B cell (primary cell): ENCODE measurements at regions of chr15 and their contacts with region 1.

Region 1: DNA sequence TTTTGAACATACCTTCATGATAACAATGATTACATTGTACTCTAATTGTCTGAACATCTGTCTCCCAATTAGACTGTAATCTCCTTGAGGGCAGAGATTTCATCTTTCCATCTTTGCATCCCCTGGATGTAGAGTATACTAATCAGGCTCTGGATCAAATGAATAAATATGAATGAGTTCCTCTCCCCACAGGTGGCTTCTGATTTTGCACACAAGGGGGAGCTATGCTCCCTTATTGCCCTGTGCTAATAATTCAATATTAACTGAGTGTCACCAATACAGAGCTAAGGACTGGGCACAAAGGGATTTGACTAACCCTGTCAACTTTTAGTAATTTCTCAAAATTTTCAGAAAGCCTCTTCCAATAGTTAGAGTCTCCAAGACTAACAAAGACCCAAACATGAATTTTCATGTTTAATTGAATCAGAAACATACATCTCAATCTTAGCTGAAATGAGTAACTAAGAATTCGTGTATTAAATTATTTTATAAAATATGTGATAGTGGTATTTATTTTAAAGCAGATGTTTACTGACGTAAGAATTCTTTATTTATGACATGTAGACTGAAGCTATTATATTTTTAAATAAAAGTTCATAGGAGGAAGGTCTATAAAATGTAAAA is 3.0 kb downstream of the DUOXA1 start:
- DNase-seq: peak; percentile 70
- ATAC-seq: peak; percentile 59
- H3K4me3 ChIP-seq: no peak overlapping the region
- H3K4me3 Mint-ChIP-seq: no peak overlapping the region
- H3K27ac ChIP-seq: no peak overlapping the region
- H3K27ac Mint-ChIP-seq: no peak overlapping the region
- H3K4me1 ChIP-seq: peaks cover 15 to 22% of the 10 kb centered on the region in 2 donors
- H3K4me1 Mint-ChIP-seq: peaks cover 8% of the 10 kb centered on the region
- H3K27me3 ChIP-seq: peaks cover 0 to 55% (median 28%) of the 10 kb centered on the region in 4 experiments
- H3K27me3 Mint-ChIP-seq: peaks cover 60% of the 10 kb centered on the region
- CTCF ChIP-seq: peak; percentile 93

Region 2: DNA sequence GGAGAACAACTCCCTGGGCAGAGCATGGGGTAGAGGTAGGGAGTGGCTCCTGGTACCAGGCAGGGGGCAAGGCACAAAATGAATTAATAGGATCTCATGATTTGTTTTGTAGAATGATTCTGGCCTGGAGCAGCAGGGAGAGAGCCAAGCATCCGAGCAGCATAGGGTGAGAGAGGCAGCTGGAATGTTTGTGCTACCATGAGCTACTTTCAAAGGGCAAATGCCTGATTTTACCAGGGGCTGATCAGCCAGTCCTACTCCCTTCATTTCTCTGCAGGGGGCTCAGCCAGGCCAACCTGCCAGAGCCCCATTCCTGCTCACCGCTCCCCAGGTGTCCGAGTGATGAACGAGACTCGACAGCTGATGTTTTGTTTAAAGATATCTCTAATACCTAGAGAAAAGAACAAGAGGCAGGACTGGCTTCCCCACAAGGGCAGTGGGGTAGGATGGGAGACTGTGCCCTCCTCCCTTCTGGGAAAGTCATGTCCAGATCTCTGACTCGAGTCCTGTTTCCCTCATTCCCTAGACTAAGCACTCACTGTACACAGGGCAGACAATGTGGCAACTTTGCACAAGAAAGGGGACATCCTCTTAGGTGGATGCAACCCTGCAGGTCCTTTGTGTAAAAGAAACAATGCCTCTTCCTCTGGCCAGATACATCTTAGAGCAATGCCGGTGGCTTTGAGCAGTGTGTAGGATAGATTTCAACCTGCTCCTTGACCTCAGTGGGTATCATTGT is 25.6 kb before region 1 on chr15:
- CTCF ChIA-PET with region 1: no interaction called
- POLR2A ChIA-PET with region 1: no interaction called
- intact Hi-C with region 1: no loop called
- DNase-seq: no peak
- ATAC-seq: no peak
- H3K4me3 ChIP-seq: no peak overlapping the region
- H3K4me3 Mint-ChIP-seq: no peak overlapping the region
- H3K27ac ChIP-seq: no peak overlapping the region
- H3K27ac Mint-ChIP-seq: no peak overlapping the region
- H3K4me1 ChIP-seq: no peaks in the 10 kb centered on the region
- H3K4me1 Mint-ChIP-seq: no peaks in the 10 kb centered on the region
- H3K27me3 ChIP-seq: peaks cover 0 to 2% (median 0%) of the 10 kb centered on the region in 4 experiments
- H3K27me3 Mint-ChIP-seq: peaks cover 23% of the 10 kb centered on the region
- CTCF ChIP-seq: no peak

Region 3: DNA sequence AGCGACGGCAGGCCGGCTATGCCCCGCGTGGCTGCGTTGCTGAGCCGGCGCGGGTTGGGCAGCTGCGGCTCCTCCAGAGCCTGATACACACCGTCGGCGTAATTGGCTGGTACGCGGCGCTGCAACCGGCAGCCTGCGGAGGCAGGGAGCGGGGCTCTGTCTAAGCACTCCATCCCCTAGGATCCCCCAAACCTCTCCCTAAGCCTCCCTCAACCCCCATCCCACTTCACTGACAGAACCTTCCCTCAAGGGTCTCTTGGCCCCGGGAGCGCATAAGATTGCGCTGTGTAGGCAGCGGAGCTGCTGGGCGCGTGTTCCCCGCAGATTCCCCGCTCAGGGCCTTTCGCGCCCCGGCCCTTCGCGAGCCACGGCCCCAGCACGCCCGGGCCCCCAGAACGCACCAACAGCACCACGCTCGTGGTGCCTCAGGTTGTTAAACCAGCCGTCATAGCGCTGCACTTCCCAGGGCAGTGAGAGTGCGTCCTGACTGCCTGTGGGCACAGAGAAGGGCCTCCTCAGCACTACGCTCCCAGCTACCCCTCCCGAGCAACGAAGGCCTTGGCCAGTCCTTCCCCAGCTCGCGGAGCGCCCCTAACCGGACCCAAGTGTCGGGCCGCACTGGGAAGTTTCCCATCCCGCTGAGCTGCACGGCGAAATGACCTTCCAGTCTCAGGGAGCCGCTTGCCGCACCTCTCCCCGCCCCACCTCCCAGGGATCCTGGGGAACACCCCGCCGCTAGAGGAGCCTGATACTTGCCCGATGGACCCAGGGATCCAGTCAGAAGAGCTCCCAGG is 13.9 kb before region 1 on chr15:
- CTCF ChIA-PET with region 1: interaction called, 33 read pairs
- POLR2A ChIA-PET with region 1: no interaction called
- intact Hi-C with region 1: no loop called
- DNase-seq: peak; percentile 50
- ATAC-seq: no peak
- H3K4me3 ChIP-seq: peak overlapping the region in 3 of 5 experiments; percentile 18 to 23 (median 21)
- H3K4me3 Mint-ChIP-seq: peak overlapping the region; percentile 85
- H3K27ac ChIP-seq: no peak overlapping the region
- H3K27ac Mint-ChIP-seq: no peak overlapping the region
- H3K4me1 ChIP-seq: peaks cover 51 to 60% of the 10 kb centered on the region in 2 donors
- H3K4me1 Mint-ChIP-seq: peaks cover 52% of the 10 kb centered on the region
- H3K27me3 ChIP-seq: peaks cover 0 to 85% (median 60%) of the 10 kb centered on the region in 4 experiments
- H3K27me3 Mint-ChIP-seq: peaks cover 77% of the 10 kb centered on the region
- CTCF ChIP-seq: no peak